ENCODE measurements at regions of chr9 and their contacts with region 1.

Region 1: DNA sequence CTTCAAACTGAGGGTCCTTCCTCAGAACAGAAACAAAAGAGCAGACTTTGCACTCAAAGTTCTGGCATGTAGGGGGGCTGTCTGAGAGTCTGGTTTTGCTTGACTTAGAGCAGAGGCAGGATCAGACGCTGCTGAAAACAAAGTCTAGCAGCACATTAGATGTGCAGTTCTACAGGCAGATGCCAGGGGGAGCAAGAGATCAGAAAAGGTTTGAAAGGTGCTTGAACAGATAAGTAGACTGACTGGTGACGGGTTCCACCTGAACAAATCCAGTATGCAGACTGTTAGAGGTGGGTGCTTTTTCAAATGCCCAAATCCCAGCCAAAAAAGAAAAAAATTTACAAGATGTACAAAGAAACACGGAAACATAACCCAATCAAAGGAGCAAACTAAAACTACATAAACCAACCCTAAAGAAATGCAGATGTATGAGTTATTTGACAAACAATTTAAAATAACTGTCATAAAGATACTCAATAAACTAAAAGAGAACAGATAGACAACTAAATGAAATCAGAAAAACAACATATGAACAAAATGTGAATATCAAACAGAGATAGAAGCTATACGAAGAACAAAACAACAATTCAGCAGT is 194.7 kb upstream of the FREM1 start:
- DNase-seq: no peak
- H3K4me3 ChIP-seq: no peak overlapping the region
- H3K27ac ChIP-seq: no peak overlapping the region
- H3K4me1 ChIP-seq: no peaks in the 10 kb centered on the region
- H3K27me3 ChIP-seq: no peaks in the 10 kb centered on the region
- CTCF ChIP-seq: peak; percentile 63 to 77 (median 72)

Region 2: GRCh38 chr9:15135164-15135792 is 30.4 kb after region 1 on chr9:
- intact Hi-C with region 1: loop called (anchors 2 kb)
- DNase-seq: peak in 1 of 2 donors; percentile 81
- H3K4me3 ChIP-seq: peak overlapping the region; percentile 24 to 42
- H3K27ac ChIP-seq: no peak overlapping the region
- H3K4me1 ChIP-seq: peaks cover 0 to 8% of the 10 kb centered on the region in 2 donors
- H3K27me3 ChIP-seq: no peaks in the 10 kb centered on the region
- CTCF ChIP-seq: peak; percentile 78 to 96 (median 93)

Region 3: DNA sequence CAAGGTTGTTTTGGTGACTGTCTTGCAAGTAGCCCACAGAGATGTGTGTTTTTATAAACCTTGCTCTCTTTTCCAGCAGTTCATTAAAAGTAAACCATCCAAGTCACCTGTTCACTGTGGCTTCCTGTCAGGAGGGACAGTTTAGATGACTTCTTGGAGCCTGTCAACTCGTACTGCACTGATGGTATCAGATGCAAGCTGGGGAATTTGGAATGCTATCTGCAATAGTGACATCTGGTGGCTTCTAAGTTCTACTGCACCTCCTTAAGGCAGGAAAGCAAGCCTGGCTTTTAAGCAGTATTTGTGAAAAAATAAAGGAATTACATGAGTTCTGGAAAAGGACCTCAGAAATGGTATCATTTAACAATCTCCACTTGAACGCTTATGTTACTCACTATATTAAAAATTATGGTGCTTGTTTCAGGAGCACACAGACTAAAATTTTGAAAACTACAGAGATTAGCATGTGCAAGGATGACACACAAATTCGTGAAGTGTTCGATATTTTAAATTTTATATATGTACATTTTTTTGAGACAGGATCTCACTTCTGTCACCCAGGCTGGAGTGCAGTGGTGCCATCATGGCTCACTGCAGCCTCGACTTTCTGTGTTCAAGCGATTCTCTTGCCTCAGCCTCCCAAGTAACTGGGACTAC is 38.1 kb after region 1 on chr9:
- intact Hi-C with region 1: loop called (anchors 2 kb)
- DNase-seq: no peak
- H3K4me3 ChIP-seq: no peak overlapping the region
- H3K27ac ChIP-seq: no peak overlapping the region
- H3K4me1 ChIP-seq: no peaks in the 10 kb centered on the region
- H3K27me3 ChIP-seq: no peaks in the 10 kb centered on the region
- CTCF ChIP-seq: peak; percentile 22 to 81 (median 78)

Region 4: DNA sequence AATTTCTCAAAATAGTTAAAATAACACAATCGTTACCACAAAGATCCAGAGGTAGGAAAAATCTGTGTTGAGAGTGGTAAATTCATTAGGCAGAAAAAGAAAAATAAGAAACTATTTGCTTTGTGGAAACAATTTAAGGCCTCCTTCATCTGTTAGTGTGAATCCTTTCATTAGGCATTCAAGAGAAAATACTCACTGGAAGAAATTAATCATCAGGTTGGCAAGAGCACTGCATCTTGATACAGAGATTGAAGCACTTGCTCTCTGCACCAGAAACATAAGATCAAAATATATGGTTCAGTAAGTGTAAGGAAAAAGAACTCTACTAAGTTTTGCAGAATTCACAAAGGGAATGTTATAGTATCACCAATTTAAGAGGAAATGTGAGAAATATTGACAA is 157.7 kb after region 1 on chr9:
- intact Hi-C with region 1: no loop called
- DNase-seq: no peak
- H3K4me3 ChIP-seq: no peak overlapping the region
- H3K27ac ChIP-seq: peak overlapping the region; percentile 73 to 75
- H3K4me1 ChIP-seq: peaks cover 0 to 30% of the 10 kb centered on the region in 2 donors
- H3K27me3 ChIP-seq: no peaks in the 10 kb centered on the region
- CTCF ChIP-seq: no peak